ENCODE measurements at regions of chr3 and their contacts with region 1.

Region 1: GRCh38 chr3:105014631-105015030 is 352.1 kb upstream of the ALCAM start:
- DNase-seq: peak; percentile 69
- ATAC-seq: peak; percentile 98
- H3K4me3 ChIP-seq: no peak overlapping the region
- H3K27ac ChIP-seq: no peak overlapping the region
- H3K4me1 ChIP-seq: peaks cover 18% of the 10 kb centered on the region
- H3K27me3 ChIP-seq: no peaks in the 10 kb centered on the region
- CTCF ChIP-seq: no peak

Region 2: GRCh38 chr3:104961851-104962250 is 52.8 kb before region 1 on chr3:
- CTCF ChIA-PET with region 1: no interaction called
- POLR2A ChIA-PET with region 1: no interaction called
- intact Hi-C with region 1: loop called (anchors 5 kb)
- DNase-seq: no peak
- ATAC-seq: no peak
- H3K4me3 ChIP-seq: no peak overlapping the region
- H3K27ac ChIP-seq: no peak overlapping the region
- H3K4me1 ChIP-seq: no peaks in the 10 kb centered on the region
- H3K27me3 ChIP-seq: no peaks in the 10 kb centered on the region
- CTCF ChIP-seq: no peak

Region 3: GRCh38 chr3:105032541-105032940 is 17.9 kb after region 1 on chr3:
- CTCF ChIA-PET with region 1: no interaction called
- POLR2A ChIA-PET with region 1: no interaction called
- intact Hi-C with region 1: no loop called
- DNase-seq: no peak
- ATAC-seq: no peak
- H3K4me3 ChIP-seq: no peak overlapping the region
- H3K27ac ChIP-seq: no peak overlapping the region
- H3K4me1 ChIP-seq: no peaks in the 10 kb centered on the region
- H3K27me3 ChIP-seq: no peaks in the 10 kb centered on the region
- CTCF ChIP-seq: no peak